ENCODE measurements at regions of chr9 and their contacts with region 1.

Region 1: DNA sequence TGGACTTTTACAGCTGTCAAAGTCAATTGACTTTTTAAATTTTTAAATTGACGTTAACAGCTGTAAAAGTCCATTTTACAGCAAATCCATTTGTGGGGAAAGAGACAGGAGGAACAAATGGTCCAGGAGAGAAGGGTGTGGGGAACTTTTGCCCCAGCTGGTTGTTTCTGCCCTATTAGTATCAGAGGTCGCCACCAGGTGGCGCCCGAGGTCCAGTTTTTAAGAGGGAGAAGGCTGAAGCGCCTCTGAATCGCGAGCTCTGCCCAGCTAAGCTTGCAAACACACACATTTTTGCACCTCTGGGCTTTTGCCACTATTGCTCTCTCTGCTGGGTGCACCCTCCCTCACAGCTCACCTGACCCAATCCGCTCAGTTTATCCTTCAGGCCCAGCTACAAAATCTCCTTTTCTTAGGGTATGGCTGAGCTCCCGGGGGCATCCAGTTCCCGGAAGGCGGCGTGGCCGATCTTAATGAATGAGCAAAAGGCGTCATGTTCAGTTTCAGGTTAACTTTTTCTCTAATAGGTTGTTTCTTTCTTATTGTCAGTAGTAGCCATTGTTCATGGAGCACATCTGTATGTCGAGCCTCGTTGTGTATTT is 6.3 kb upstream of the TTLL11 start:
- DNase-seq: peak; percentile 53
- ATAC-seq: peak; percentile 88
- H3K4me3 ChIP-seq: no peak overlapping the region
- H3K27ac ChIP-seq: no peak overlapping the region
- H3K4me1 ChIP-seq: no peaks in the 10 kb centered on the region; a peak in 1 of 4 replicates
- H3K27me3 ChIP-seq: no peaks in the 10 kb centered on the region
- CTCF ChIP-seq: peak; percentile 78 to 97 (median 80)
- POLR2A ChIP-seq: no peak
- RAD21 ChIP-seq: peak; percentile 86

Region 2: GRCh38 chr9:122116040-122116439 is 16.7 kb after region 1 on chr9:
- CTCF ChIA-PET with region 1: interaction called, 169 read pairs
- POLR2A ChIA-PET with region 1: no interaction called
- RAD21 ChIA-PET with region 1: interaction called, 4 to 6 read pairs
- intact Hi-C with region 1: no loop called
- DNase-seq: no peak
- ATAC-seq: no peak
- H3K4me3 ChIP-seq: no peak overlapping the region
- H3K27ac ChIP-seq: no peak overlapping the region
- H3K4me1 ChIP-seq: no peaks in the 10 kb centered on the region
- H3K27me3 ChIP-seq: peaks cover 4% of the 10 kb centered on the region
- CTCF ChIP-seq: no peak
- POLR2A ChIP-seq: no peak
- RAD21 ChIP-seq: no peak

Region 3: DNA sequence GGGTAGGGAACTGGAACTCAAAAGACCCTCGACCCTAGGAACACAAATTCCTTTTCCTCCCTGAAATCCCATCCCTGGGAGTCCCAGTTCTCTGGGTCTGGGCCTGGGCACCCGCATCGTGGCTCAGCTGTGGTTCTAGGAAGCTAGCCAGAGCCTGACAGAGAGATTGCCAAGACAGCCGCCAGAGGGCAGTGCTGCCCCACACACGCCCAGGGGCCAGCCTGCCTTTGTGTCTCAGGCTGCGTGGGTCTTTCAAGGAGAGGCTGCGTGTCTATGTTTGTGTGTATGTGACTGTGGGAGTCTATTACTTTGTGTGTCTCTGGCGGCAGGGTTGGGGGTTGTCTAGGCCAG is 25.8 kb after region 1 on chr9:
- CTCF ChIA-PET with region 1: interaction called, 169 read pairs
- POLR2A ChIA-PET with region 1: interaction called, 4 read pairs
- RAD21 ChIA-PET with region 1: interaction called, 14 to 19 read pairs
- intact Hi-C with region 1: loop called (anchors 1 kb)
- DNase-seq: peak; percentile 56
- ATAC-seq: peak; percentile 88
- H3K4me3 ChIP-seq: no peak overlapping the region
- H3K27ac ChIP-seq: no peak overlapping the region
- H3K4me1 ChIP-seq: peaks cover 0 to 12% of the 10 kb centered on the region in 2 experiments; a peak in 1 of 4 replicates
- H3K27me3 ChIP-seq: no peaks in the 10 kb centered on the region
- CTCF ChIP-seq: peak; percentile 92 to 97 (median 97)
- POLR2A ChIP-seq: no peak
- RAD21 ChIP-seq: peak; percentile 100

Region 4: GRCh38 chr9:122350638-122351355 is 251.4 kb after region 1 on chr9:
- CTCF ChIA-PET with region 1: interaction called, 75 read pairs
- POLR2A ChIA-PET with region 1: interaction called, 3 read pairs
- RAD21 ChIA-PET with region 1: interaction called, 14 read pairs
- intact Hi-C with region 1: loop called (anchors 1 kb)
- DNase-seq: peak; percentile 27
- ATAC-seq: peak; percentile 91
- H3K4me3 ChIP-seq: no peak overlapping the region
- H3K27ac ChIP-seq: no peak overlapping the region
- H3K4me1 ChIP-seq: peaks cover 3 to 13% of the 10 kb centered on the region in 2 experiments; a peak in 3 of 4 replicates
- H3K27me3 ChIP-seq: no peaks in the 10 kb centered on the region
- CTCF ChIP-seq: peak; percentile 93 to 97 (median 93)
- POLR2A ChIP-seq: no peak
- RAD21 ChIP-seq: peak; percentile 99

Region 5: GRCh38 chr9:122356627-122357026 is 257.3 kb after region 1 on chr9:
- CTCF ChIA-PET with region 1: interaction called, 75 read pairs
- POLR2A ChIA-PET with region 1: no interaction called
- RAD21 ChIA-PET with region 1: no interaction called
- intact Hi-C with region 1: no loop called
- DNase-seq: no peak
- ATAC-seq: peak; percentile 91
- H3K4me3 ChIP-seq: no peak overlapping the region
- H3K27ac ChIP-seq: no peak overlapping the region
- H3K4me1 ChIP-seq: no peaks in the 10 kb centered on the region
- H3K27me3 ChIP-seq: no peaks in the 10 kb centered on the region
- CTCF ChIP-seq: peak in 2 of 3 experiments; percentile 62 to 63; a peak in 4 of 6 replicates
- POLR2A ChIP-seq: no peak
- RAD21 ChIP-seq: 0 out of 2 replicates have a peak, but pooled peaks have one; percentile 18

Region 6: DNA sequence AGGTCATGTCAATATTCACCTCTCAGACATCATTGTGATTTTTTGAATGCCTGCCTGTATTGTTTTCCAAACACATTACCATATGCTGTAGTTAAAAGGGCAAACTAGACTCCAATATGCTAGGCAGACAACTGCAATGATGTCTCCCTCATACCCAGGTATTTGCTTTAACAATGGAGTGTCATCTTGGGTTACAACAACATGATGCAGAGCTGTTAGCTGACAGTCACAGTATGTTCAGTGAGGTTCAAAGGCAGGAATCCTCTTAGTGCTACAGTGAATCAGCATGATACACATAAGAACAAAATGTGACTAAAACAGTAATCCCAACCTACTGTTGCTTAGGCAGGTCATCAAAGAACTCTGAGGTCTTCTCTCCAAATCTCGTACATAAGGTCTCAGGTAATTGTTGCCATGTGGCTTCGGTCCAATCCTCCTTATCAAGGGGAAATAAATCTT is 354.3 kb after region 1 on chr9:
- CTCF ChIA-PET with region 1: interaction called, 18 read pairs
- POLR2A ChIA-PET with region 1: no interaction called
- RAD21 ChIA-PET with region 1: no interaction called
- intact Hi-C with region 1: loop called (anchors 1 kb)
- DNase-seq: no peak
- ATAC-seq: no peak; the same call in 1 of the 2 replicates
- H3K4me3 ChIP-seq: no peak overlapping the region
- H3K27ac ChIP-seq: no peak overlapping the region
- H3K4me1 ChIP-seq: peaks cover 0 to 7% of the 10 kb centered on the region in 2 experiments; a peak in 1 of 4 replicates
- H3K27me3 ChIP-seq: no peaks in the 10 kb centered on the region
- CTCF ChIP-seq: no peak
- POLR2A ChIP-seq: no peak
- RAD21 ChIP-seq: no peak

Region 7: DNA sequence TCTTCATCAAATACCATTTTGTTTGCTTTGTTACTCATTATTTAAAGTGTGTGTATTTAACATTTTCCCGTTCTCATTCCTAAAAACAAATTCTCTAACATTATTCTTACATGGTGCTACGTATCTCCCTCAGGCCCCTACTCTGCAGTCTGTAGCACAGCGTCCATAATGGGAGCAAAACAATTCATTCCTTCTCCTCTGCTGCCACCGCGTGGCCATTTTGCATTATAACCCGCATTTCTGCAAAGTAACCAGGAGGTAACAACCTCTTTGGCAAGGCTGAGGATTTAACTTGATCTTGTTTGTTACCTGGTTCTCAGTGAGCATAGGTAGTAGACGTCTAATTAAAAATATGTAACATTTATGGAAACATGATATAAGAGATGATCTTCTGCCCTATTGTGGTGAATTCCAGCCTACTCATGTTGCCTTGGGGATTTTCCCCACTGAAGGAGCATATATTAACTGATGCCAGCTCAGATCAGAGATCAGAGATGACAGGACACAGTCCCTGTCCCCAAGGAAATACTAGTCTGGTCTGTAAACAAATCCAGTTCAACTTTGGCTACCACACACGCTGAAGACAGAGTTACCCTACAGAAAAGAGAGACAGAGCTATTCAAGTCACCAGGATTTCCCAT is 711.1 kb after region 1 on chr9:
- CTCF ChIA-PET with region 1: interaction called, 12 read pairs
- POLR2A ChIA-PET with region 1: no interaction called
- RAD21 ChIA-PET with region 1: no interaction called
- intact Hi-C with region 1: loop called (anchors 1 kb)
- DNase-seq: peak; percentile 61
- ATAC-seq: peak; percentile 96
- H3K4me3 ChIP-seq: no peak overlapping the region
- H3K27ac ChIP-seq: no peak overlapping the region
- H3K4me1 ChIP-seq: peaks cover 1 to 6% of the 10 kb centered on the region in 2 experiments; a peak in 3 of 4 replicates
- H3K27me3 ChIP-seq: no peaks in the 10 kb centered on the region
- CTCF ChIP-seq: peak; percentile 54 to 89 (median 85)
- POLR2A ChIP-seq: no peak
- RAD21 ChIP-seq: peak; percentile 97